ENCODE measurements at regions of chr11 and their contacts with region 1.

Region 1: GRCh38 chr11:128757235-128757711 is 63.4 kb downstream of the FLI1 start:
- DNase-seq: peak; percentile 40 to 90 (median 60)
- ATAC-seq: peak; percentile 99
- H3K4me3 ChIP-seq: no peak overlapping the region
- H3K4me3 Mint-ChIP-seq: peak overlapping the region; percentile 7
- H3K27ac ChIP-seq: no peak overlapping the region
- H3K27ac Mint-ChIP-seq: peak overlapping the region; percentile 63
- H3K4me1 ChIP-seq: peaks cover 80% of the 10 kb centered on the region
- H3K4me1 Mint-ChIP-seq: peaks cover 93% of the 10 kb centered on the region
- H3K27me3 ChIP-seq: no peaks in the 10 kb centered on the region
- H3K27me3 Mint-ChIP-seq: no peaks in the 10 kb centered on the region
- CTCF ChIP-seq: peak; percentile 74

Region 2: DNA sequence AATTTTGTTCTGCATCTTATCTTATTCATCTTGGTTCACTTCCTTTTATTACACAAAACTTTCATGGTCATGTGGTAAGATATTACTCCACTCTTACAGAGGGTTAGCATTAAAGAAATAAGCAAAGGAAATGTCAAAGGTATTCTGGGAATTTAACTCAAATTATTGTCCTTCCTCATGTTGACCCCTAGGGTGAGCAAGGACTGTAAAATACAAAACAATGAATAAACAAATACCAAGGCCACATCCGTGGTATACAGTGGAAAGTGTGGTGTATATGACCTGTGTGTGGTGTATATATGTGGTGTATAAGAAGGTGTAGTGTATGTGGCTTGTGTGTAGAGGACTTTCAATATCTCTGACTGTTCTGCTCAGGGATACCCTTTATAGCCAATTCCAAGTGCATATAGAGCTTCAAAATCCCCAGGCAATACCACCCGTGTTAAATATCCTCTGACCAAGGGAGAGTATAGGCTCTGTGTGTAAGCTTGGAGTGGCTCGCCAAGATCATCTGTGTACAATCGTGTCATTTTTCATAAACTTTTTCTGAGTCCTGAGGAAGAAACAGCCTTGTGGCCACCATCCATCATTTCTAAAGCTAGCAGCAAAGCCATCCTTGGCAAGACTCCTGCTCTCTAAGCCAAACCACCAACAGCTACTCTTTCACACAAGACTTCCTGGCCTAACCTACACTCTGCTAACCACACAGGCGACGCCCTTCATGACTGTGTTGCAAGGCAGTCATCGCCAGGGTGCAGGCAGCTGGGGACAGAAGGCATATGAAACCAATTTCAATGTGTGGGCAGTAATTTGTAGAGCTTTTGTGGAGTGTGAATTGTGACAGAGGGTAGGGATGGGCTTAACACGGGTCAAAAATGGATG is 717.9 kb before region 1 on chr11:
- CTCF ChIA-PET with region 1: no interaction called
- POLR2A ChIA-PET with region 1: no interaction called
- intact Hi-C with region 1: loop called in 1 of 2 experiments (anchors 5 kb)
- DNase-seq: peak; percentile 55 to 94 (median 72)
- ATAC-seq: peak; percentile 96
- H3K4me3 ChIP-seq: peak overlapping the region; percentile 47
- H3K4me3 Mint-ChIP-seq: peak overlapping the region; percentile 72
- H3K27ac ChIP-seq: peak overlapping the region; percentile 29 to 50
- H3K27ac Mint-ChIP-seq: no peak overlapping the region
- H3K4me1 ChIP-seq: peaks cover 64% of the 10 kb centered on the region
- H3K4me1 Mint-ChIP-seq: peaks cover 59% of the 10 kb centered on the region
- H3K27me3 ChIP-seq: no peaks in the 10 kb centered on the region
- H3K27me3 Mint-ChIP-seq: no peaks in the 10 kb centered on the region
- CTCF ChIP-seq: peak; percentile 8

Region 3: DNA sequence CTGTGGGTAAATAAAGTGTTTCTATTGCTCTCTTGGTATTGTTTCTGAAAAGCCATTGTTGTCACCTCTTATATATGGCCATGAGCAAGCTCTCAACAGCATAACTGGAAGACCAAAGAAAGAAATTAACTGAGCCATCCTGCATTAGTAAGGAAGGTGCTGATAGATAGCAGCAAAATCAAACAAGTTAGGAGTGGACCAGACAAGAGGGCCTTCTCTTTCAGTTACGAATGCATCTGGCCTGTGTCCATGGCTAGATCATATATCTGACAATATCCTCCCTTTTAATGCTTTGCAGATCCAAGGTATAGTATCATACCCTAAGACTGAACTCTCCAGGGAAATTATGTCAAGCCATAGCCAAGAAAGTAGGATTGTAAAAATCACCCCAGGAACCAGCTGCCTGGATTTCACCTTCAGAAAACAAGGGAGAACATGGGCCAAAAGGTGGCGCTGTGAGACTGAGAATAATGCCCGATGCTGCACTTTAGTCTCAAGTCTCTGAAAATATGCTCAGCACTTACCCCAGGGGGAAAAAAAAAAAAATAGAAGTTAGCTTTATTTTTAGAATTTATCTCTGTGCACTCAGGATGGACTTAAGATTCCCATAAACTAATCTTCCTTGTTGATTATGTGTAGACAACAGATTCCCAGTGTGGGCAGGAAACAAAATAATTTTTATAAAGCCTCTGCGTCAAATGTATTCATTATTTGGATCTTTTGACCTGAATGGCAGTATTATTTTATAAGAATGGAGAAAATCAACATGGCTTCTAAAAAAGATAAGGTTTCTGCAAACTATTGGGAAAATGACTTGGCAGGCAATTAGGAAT is 585.0 kb before region 1 on chr11:
- CTCF ChIA-PET with region 1: interaction called, 29 read pairs
- POLR2A ChIA-PET with region 1: interaction called, 5 read pairs
- intact Hi-C with region 1: loop called (anchors 1 to 2 kb)
- DNase-seq: peak; percentile 73 to 92 (median 84)
- ATAC-seq: peak; percentile 83
- H3K4me3 ChIP-seq: no peak overlapping the region
- H3K4me3 Mint-ChIP-seq: no peak overlapping the region
- H3K27ac ChIP-seq: no peak overlapping the region
- H3K27ac Mint-ChIP-seq: no peak overlapping the region
- H3K4me1 ChIP-seq: no peaks in the 10 kb centered on the region
- H3K4me1 Mint-ChIP-seq: peaks cover 6% of the 10 kb centered on the region
- H3K27me3 ChIP-seq: no peaks in the 10 kb centered on the region
- H3K27me3 Mint-ChIP-seq: no peaks in the 10 kb centered on the region
- CTCF ChIP-seq: peak; percentile 91

Region 4: DNA sequence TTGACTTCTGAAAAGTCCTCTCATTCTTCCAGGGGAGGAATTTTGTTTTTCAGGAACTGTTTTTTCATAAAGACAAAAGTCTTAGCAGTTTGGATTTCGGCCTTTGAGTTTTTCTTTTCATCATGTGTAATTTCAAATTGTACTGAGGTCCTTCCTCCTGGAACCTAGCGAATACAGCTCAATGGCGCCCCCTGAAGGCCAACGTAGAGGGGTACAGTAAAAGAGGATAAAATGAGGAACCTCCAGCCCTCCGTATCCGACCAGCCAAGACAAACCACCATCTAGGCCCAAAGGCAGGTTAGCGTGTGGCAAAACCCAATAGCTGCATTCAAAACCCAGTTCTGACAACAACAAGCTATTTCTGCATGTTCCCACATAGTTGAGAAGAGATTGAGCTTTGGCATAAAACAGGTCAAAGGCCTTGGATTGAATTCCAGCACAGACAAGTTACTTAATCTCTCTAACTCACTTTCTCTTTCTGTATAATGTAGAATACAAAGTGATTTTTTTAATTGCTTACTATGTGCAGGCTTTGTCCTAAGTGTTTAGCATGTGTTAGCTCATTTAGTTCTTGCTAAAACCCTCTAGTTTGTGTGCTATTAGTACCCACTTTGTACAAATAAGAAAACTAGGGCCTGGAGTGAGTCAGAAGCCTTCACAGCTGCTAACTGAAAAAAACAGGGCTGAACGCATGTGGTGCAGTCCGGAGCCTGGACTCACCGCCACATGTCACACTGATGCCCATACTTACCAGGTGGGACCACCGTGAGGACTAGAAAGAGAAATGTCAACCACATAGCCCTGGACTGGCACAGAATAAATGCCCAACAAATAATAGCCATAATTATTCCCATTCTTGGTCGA is 126.7 kb before region 1 on chr11:
- CTCF ChIA-PET with region 1: interaction called, 16 read pairs
- POLR2A ChIA-PET with region 1: interaction called, 7 read pairs
- intact Hi-C with region 1: loop called (anchors 1 to 2 kb)
- DNase-seq: peak; percentile 85 to 98 (median 92)
- ATAC-seq: peak; percentile 79
- H3K4me3 ChIP-seq: no peak overlapping the region
- H3K4me3 Mint-ChIP-seq: peak overlapping the region; percentile 62
- H3K27ac ChIP-seq: peak overlapping the region; percentile 56 to 70
- H3K27ac Mint-ChIP-seq: peak overlapping the region; percentile 97
- H3K4me1 ChIP-seq: peaks cover 65% of the 10 kb centered on the region
- H3K4me1 Mint-ChIP-seq: peaks cover 69% of the 10 kb centered on the region
- H3K27me3 ChIP-seq: no peaks in the 10 kb centered on the region
- H3K27me3 Mint-ChIP-seq: no peaks in the 10 kb centered on the region
- CTCF ChIP-seq: peak; percentile 89

Region 5: GRCh38 chr11:128720522-128720985 is 36.7 kb before region 1 on chr11:
- CTCF ChIA-PET with region 1: interaction called, 16 read pairs
- POLR2A ChIA-PET with region 1: interaction called, 3 read pairs
- intact Hi-C with region 1: loop called in 1 of 2 experiments (anchors 2 kb)
- DNase-seq: peak in 9 of 14 experiments; percentile 20 to 74 (median 33)
- ATAC-seq: peak; percentile 46
- H3K4me3 ChIP-seq: peak overlapping the region; percentile 37
- H3K4me3 Mint-ChIP-seq: peak overlapping the region; percentile 87
- H3K27ac ChIP-seq: peak overlapping the region; percentile 65 to 84
- H3K27ac Mint-ChIP-seq: peak overlapping the region; percentile 90
- H3K4me1 ChIP-seq: peaks cover 98% of the 10 kb centered on the region
- H3K4me1 Mint-ChIP-seq: peaks cover 99% of the 10 kb centered on the region
- H3K27me3 ChIP-seq: no peaks in the 10 kb centered on the region
- H3K27me3 Mint-ChIP-seq: peaks cover 3% of the 10 kb centered on the region
- CTCF ChIP-seq: no peak

Region 6: DNA sequence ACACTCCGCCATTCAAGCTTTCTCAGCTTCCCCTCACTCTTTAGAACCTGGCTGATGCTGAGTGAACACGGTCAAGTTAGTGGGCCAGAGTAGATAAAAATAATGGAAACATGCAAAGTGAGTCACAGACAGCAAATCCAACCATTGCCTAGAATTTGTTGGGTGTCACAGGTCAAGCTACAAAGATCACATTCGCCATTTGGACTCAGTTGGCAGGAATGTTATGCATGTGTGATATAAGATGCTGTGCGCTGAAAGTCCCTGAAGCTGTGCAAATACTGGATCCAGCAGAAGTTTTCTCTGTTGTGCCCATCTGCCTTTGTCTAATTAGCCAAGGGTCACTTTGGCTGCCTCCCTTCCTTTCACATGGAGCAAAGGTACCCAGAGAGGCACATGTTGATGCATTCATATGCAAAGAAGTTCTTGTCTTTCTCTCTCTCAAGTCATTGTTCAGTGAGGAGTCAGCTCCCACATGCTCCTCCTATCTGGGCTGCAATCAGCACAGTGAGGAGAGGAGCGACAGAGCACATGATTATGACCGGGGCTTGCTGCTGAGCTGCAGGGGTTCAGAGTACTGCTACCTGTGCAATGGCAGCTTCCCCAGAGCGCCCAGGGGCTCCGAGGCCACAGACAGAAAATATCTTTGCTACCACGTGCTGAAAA is 23.7 kb before region 1 on chr11:
- CTCF ChIA-PET with region 1: interaction called, 16 read pairs
- POLR2A ChIA-PET with region 1: interaction called, 4 read pairs
- intact Hi-C with region 1: loop called in 1 of 2 experiments (anchors 2 kb)
- DNase-seq: peak in 7 of 14 experiments; percentile 22 to 60 (median 45)
- ATAC-seq: peak; percentile 52
- H3K4me3 ChIP-seq: peak overlapping the region; percentile 6
- H3K4me3 Mint-ChIP-seq: peak overlapping the region; percentile 76
- H3K27ac ChIP-seq: no peak overlapping the region
- H3K27ac Mint-ChIP-seq: peak overlapping the region; percentile 90
- H3K4me1 ChIP-seq: peaks cover 98% of the 10 kb centered on the region
- H3K4me1 Mint-ChIP-seq: peaks cover 98% of the 10 kb centered on the region
- H3K27me3 ChIP-seq: no peaks in the 10 kb centered on the region
- H3K27me3 Mint-ChIP-seq: no peaks in the 10 kb centered on the region
- CTCF ChIP-seq: no peak

Region 7: GRCh38 chr11:128745311-128746136 is 11.7 kb before region 1 on chr11:
- CTCF ChIA-PET with region 1: interaction called, 12 read pairs
- POLR2A ChIA-PET with region 1: interaction called, 10 read pairs
- intact Hi-C with region 1: no loop called
- DNase-seq: peak in 1 of 14 experiments; percentile 33
- ATAC-seq: no peak
- H3K4me3 ChIP-seq: no peak overlapping the region
- H3K4me3 Mint-ChIP-seq: no peak overlapping the region
- H3K27ac ChIP-seq: no peak overlapping the region
- H3K27ac Mint-ChIP-seq: peak overlapping the region; percentile 70
- H3K4me1 ChIP-seq: peaks cover 71% of the 10 kb centered on the region
- H3K4me1 Mint-ChIP-seq: peaks cover 92% of the 10 kb centered on the region
- H3K27me3 ChIP-seq: no peaks in the 10 kb centered on the region
- H3K27me3 Mint-ChIP-seq: no peaks in the 10 kb centered on the region
- CTCF ChIP-seq: no peak

Measured in CD4-positive, alpha-beta T cell (primary cell).